ENCODE measurements at regions of chr19 and their contacts with region 1.

Region 1: GRCh38 chr19:977058-977692 is 7.0 kb upstream of the WDR18 start:
- DNase-seq: no peak
- ATAC-seq: no peak
- H3K4me3 ChIP-seq: no peak overlapping the region
- H3K27ac ChIP-seq: no peak overlapping the region
- H3K4me1 ChIP-seq: peaks cover 0 to 10% (median 6%) of the 10 kb centered on the region in 4 donors
- H3K27me3 ChIP-seq: no peaks in the 10 kb centered on the region
- CTCF ChIP-seq: no peak
- POLR2A ChIP-seq: no peak

Region 2: DNA sequence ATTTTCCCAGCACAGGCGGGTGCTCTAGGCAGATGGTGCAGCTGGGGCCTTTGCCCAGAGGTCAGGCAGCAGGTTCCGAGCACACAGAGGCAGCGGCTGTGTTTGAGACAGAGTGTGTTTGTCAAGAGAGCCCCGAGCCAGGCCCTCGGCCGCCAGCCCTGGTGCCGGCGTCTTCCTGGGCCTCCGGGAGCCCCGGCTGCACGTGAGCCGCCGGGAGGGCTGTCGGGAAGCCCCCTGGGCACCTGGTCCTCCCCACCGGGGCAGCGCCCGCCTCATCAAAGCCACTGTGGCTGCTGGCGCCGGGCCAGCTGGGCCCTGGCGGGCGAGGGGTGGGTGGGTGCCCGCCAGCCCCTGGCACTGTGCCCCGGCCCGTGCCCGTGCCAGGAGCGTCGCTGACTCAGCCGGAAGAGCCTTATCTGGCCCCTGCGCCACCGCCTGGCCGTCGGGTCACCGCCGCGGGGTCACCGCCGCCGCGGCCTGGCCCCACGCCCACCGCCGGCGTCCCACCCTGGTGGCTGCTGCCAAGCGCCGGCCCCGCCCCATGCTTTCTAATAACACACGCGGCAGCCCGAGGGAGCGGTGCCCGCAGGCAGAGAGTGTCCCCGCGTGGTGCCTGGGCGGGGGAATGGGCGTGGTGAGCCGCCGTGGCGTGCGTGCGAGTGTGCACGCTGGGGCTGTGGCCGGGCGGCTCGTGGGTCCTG is 36.4 kb before region 1 on chr19:
- intact Hi-C with region 1: loop called in 1 of 2 experiments (anchors 5 kb)
- DNase-seq: peak; percentile 88 to 94 (median 94)
- ATAC-seq: peak; percentile 85 to 93 (median 90)
- H3K4me3 ChIP-seq: peak overlapping the region; percentile 20 to 37 (median 23)
- H3K27ac ChIP-seq: peak overlapping the region in 2 of 3 donors; percentile 39 to 72
- H3K4me1 ChIP-seq: peaks cover 2 to 20% (median 12%) of the 10 kb centered on the region in 4 donors
- H3K27me3 ChIP-seq: no peaks in the 10 kb centered on the region
- CTCF ChIP-seq: peak in 1 of 4 donors; percentile 11
- POLR2A ChIP-seq: no peak

Region 3: DNA sequence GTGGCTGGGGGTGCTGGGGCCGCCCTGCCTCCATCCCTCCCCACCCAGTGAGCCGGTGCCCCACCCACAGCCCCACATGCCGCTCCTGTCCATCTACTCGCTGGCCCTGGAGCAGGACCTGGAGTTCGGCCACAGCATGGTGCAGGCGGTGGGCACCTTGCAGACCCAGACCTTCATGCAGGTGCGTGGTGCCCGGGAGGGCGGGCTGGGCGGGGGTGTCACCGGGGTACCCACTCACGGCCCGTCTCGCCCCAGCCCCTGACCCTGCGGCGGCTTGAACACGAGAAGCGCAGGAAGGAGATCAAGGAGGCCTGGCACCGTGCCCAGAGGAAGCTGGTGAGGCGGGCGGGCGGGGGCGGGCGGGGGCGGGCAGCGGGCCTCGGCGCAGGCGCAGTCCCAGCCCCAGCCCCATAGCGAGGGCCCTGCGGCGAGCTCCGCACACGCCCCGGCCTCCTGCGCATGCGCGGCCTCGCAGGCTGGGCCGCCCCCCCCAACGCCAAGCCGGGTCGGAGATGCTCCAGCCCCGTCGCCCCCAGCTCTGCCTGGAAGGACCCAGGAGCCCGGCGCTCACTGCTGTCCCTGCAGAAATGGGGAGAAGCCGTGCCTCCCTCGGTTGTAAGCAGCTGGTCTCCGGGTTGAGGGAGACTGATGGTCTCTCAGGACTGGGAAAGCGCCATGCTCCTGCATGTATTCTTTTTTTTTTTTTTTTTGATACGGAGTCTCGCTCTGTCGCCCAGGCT is 97.5 kb after region 1 on chr19:
- intact Hi-C with region 1: no loop called
- DNase-seq: peak; percentile 83 to 90 (median 90)
- ATAC-seq: peak; percentile 21 to 59 (median 30)
- H3K4me3 ChIP-seq: no peak overlapping the region
- H3K27ac ChIP-seq: peak overlapping the region in 1 of 3 donors; percentile 51
- H3K4me1 ChIP-seq: peaks cover 0 to 15% (median 3%) of the 10 kb centered on the region in 4 donors
- H3K27me3 ChIP-seq: peaks cover 0 to 15% of the 10 kb centered on the region in 2 donors
- CTCF ChIP-seq: no peak
- POLR2A ChIP-seq: no peak

Region 4: DNA sequence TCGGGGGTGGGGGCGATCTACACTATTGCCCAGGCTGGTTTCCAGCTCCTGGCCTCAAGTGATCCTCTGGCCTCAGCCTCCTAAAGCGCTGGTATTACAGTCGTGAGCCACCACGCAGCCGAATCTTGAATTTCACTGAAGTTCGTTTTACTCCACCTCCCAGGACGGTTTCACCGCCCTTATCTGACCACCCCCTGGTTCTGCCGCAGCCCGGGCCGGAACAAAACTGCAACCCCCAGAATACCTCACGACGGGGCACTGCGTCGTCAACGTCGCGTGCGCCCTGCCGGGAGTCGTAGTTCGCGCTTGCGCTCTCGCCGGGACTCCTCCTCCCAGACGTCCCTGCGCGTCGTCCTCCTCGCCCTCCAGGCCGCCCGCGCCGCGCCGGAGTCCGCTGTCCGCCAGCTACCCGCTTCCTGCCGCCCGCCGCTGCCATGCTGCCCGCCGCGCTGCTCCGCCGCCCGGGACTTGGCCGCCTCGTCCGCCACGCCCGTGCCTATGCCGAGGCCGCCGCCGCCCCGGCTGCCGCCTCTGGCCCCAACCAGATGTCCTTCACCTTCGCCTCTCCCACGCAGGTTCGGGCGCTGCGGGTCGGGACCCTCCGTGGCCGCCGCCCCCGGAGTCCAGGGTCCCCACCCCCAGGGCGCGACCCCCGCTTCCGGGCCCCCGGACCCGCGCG is 264.4 kb after region 1 on chr19 and contains the start of gene ATP5F1D:
- intact Hi-C with region 1: no loop called
- DNase-seq: peak; percentile 96 to 97 (median 96)
- ATAC-seq: peak; percentile 47 to 55 (median 50)
- H3K4me3 ChIP-seq: peak within 1 kb of the TSS; percentile 96 to 97 (median 97)
- H3K27ac ChIP-seq: peak within 1 kb of the TSS; percentile 76 to 92 (median 91)
- H3K4me1 ChIP-seq: peaks cover 0 to 65% (median 24%) of the 10 kb centered on the region in 4 donors
- H3K27me3 ChIP-seq: no peaks in the 10 kb centered on the region
- CTCF ChIP-seq: no peak
- POLR2A ChIP-seq: peak; percentile 84
- total RNA-seq, gene ATP5F1D: 98.1 to 240 (median 137) TPM